Colonic mucosa (tissue), 4 donors: ENCODE measurements at regions of chr11 and their contacts with region 1.

Region 1: GRCh38 chr11:58286249-58286648 is 18.2 kb upstream of the OR10W1 start:
- DNase-seq: peak; percentile 29
- H3K4me3 ChIP-seq: no peak overlapping the region
- H3K27ac ChIP-seq: no peak overlapping the region
- H3K4me1 ChIP-seq: no peaks in the 10 kb centered on the region
- H3K27me3 ChIP-seq: no peaks in the 10 kb centered on the region
- CTCF ChIP-seq: peak; percentile 60

Region 2: GRCh38 chr11:57823859-57824258 is 462.4 kb before region 1 on chr11:
- intact Hi-C with region 1: loop called (anchors 10 kb)
- DNase-seq: no peak
- H3K4me3 ChIP-seq: no peak overlapping the region
- H3K27ac ChIP-seq: no peak overlapping the region
- H3K4me1 ChIP-seq: no peaks in the 10 kb centered on the region
- H3K27me3 ChIP-seq: no peaks in the 10 kb centered on the region
- CTCF ChIP-seq: no peak

Region 3: DNA sequence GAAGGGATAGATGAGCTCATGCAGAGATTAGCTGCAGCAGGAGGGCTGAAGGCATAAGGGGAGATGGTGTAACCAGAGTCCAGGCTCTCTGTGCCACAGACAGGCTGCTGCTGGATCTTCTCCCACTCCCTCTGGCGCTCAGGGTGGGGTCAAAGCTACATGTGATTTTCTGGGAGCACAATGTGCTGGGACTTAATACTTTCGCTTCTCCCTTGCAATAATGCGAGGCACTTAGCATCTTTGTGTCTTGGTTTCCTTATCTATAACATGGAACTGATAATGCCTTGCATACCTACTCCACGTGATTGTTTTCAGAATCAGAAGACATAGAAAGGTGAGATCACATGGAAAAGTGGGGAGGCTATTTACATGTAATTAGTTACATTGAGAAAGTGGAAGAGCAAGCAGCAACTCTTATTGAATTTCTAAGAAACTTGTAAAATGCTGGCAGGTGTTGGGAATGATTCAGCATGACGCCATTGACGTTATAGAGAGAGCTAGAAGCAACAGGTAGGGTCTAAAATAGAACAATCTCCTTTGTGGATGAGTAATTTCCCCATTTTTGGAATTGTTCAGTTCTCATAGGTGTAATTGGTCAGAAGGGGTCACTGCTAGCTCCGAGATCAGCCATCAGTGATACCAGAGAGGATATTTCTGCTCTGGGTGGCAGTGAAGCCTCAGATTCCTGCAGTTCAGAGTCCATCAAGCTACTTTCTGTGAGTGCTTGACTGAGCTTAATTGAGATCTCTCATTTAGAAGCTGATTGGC is 152.8 kb before region 1 on chr11:
- intact Hi-C with region 1: loop called (anchors 10 kb)
- DNase-seq: no peak
- H3K4me3 ChIP-seq: no peak overlapping the region
- H3K27ac ChIP-seq: no peak overlapping the region
- H3K4me1 ChIP-seq: no peaks in the 10 kb centered on the region
- H3K27me3 ChIP-seq: no peaks in the 10 kb centered on the region
- CTCF ChIP-seq: no peak

Region 4: DNA sequence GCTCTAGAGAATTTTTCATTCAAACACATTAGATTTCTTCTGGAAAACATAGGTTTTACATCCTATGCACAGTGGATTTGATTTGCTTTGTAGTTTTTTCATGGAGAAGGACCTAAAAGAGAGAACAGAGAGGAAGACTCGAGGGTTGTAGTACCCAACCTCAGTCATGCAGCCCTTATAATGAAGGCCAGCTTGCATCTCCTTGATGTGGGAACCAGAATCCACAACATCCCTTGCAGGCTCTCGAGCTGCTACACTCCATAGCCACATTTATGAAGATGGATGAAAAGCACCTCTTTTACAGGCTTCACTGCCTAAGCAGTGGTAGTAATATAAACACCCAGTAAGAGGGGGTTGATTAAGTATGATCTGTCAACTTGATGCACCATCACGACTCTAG is 165.3 kb after region 1 on chr11:
- intact Hi-C with region 1: no loop called
- DNase-seq: no peak
- H3K4me3 ChIP-seq: no peak overlapping the region
- H3K27ac ChIP-seq: no peak overlapping the region
- H3K4me1 ChIP-seq: no peaks in the 10 kb centered on the region
- H3K27me3 ChIP-seq: no peaks in the 10 kb centered on the region
- CTCF ChIP-seq: no peak